ENCODE measurements at regions of chr5 and their contacts with region 1.

Region 1: GRCh38 chr5:58460732-58461286 is 923 bp upstream of the PLK2 start:
- DNase-seq: peak; percentile 90 to 96 (median 93)
- ATAC-seq: peak; percentile 75 to 83 (median 78)
- H3K4me3 ChIP-seq: peak overlapping the region; percentile 80 to 89 (median 85)
- H3K27ac ChIP-seq: peak overlapping the region; percentile 98 to 100 (median 99)
- H3K4me1 ChIP-seq: peaks cover 0 to 12% (median 0%) of the 10 kb centered on the region in 4 donors
- H3K27me3 ChIP-seq: no peaks in the 10 kb centered on the region
- CTCF ChIP-seq: peak; percentile 72 to 84 (median 74)
- POLR2A ChIP-seq: no peak

Region 2: DNA sequence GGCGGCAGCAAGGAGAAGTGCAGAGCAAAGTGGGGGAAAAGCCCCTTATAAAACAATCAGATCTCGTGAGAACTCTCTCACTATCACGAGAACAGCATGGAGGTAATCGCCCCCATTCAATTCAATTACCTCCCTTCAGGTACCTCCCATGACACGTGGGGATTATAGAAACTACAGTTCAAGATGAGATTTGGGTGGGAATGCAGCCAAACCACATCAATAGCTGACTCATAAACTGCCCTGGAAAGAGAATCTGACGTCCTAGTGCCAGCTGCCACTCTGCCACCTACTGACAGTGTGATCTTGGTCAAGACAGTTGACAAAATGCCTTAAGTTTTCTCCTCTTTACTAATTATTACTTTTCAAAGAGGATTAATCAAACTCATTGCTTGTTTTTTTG is 1158.6 kb before region 1 on chr5:
- intact Hi-C with region 1: loop called (anchors 10 kb)
- DNase-seq: peak in 2 of 3 donors; percentile 37 to 63
- ATAC-seq: peak; percentile 48 to 73 (median 60)
- H3K4me3 ChIP-seq: no peak overlapping the region
- H3K27ac ChIP-seq: no peak overlapping the region
- H3K4me1 ChIP-seq: peaks cover 0 to 6% (median 0%) of the 10 kb centered on the region in 4 donors
- H3K27me3 ChIP-seq: no peaks in the 10 kb centered on the region
- CTCF ChIP-seq: peak in 3 of 4 donors; percentile 21 to 31 (median 30)
- POLR2A ChIP-seq: no peak

Region 3: GRCh38 chr5:57499262-57500050 is 961.4 kb before region 1 on chr5:
- intact Hi-C with region 1: loop called in 1 of 2 experiments (anchors 10 kb)
- DNase-seq: no peak
- ATAC-seq: peak; percentile 90 to 93 (median 93)
- H3K4me3 ChIP-seq: peak overlapping the region; percentile 11 to 42 (median 32)
- H3K27ac ChIP-seq: peak overlapping the region in 2 of 3 donors; percentile 13 to 19
- H3K4me1 ChIP-seq: no peaks in the 10 kb centered on the region
- H3K27me3 ChIP-seq: no peaks in the 10 kb centered on the region
- CTCF ChIP-seq: peak; percentile 65 to 79 (median 72)
- POLR2A ChIP-seq: no peak

Region 4: GRCh38 chr5:57724836-57725235 is 736.0 kb before region 1 on chr5:
- intact Hi-C with region 1: no loop called
- DNase-seq: no peak
- ATAC-seq: no peak
- H3K4me3 ChIP-seq: no peak overlapping the region
- H3K27ac ChIP-seq: no peak overlapping the region
- H3K4me1 ChIP-seq: no peaks in the 10 kb centered on the region
- H3K27me3 ChIP-seq: no peaks in the 10 kb centered on the region
- CTCF ChIP-seq: no peak
- POLR2A ChIP-seq: no peak

Region 5: DNA sequence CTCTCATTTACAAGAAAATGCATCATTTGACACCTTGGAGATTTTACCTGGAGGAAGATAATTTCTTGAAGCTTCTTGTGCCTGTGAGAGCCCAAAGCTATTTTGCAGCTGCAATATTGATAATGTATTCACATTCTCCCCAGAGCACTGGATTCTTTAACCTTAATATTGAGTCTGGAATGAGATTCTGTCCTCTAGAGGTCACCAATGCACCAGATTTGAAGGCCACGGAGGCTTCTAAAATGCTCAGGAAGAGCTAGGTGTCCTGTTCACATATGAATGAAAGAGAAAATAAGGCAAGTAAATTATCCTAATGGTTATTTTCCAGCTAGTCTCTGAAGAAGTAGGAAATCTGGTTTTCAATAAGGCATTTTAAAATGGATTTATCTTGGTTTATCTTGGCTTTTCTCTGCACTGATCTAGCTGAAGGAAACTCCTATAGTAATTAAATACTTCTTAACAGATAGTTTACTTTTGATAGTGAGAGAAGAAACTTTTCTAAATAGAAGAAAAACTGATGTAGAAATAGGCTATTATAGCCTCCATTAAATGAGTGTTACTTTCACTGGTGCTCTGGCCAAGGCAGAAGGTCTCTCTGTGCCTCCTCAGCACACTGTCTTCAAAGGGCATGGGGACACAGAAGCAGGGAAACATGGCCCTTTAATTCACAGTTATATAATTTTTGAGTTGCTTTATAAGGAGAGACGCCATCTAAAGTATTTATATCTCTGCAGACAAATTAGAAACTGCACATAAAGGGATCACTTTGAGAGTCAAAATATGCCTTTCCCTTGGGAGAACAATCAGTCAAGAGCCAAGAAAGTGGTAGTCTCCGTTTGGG is 681.2 kb before region 1 on chr5:
- intact Hi-C with region 1: loop called in 1 of 2 experiments (anchors 10 kb)
- DNase-seq: peak in 1 of 3 donors; percentile 55
- ATAC-seq: peak; percentile 72 to 88 (median 79)
- H3K4me3 ChIP-seq: no peak overlapping the region
- H3K27ac ChIP-seq: no peak overlapping the region
- H3K4me1 ChIP-seq: peaks cover 0 to 18% (median 0%) of the 10 kb centered on the region in 4 donors
- H3K27me3 ChIP-seq: no peaks in the 10 kb centered on the region
- CTCF ChIP-seq: peak; percentile 63 to 71 (median 66)
- POLR2A ChIP-seq: no peak

Region 6: DNA sequence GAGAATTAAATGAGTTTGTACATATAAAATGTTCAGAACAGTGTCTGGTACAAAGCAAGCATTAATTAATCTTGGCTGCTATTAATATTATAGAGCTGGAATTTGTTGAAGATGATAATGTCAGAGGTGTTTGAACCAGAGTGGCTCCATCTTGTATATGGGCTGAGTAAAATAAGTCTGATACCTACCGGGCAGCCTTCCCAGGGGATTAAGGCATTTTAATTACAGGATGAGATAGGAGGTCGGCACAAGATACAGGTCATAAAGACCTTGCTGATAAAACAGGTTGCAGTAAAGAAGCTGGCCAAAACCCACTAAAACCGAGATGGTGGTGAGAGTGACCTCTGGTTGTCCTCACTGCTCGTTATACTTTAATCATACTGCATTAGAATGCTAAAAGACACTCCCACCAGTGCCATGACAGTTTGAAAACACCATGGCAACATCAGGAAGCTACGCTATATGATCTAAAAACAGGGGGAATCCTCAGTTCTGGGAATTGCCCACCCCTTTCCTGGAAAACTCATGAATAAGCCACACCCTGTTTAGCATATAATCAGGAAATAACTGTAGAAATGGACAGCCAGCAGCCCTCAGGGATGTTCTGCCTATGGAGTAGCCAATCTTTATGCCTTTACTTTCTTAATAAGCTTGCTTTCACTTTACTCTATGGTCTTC is 91.2 kb before region 1 on chr5:
- intact Hi-C with region 1: no loop called
- DNase-seq: no peak
- ATAC-seq: no peak
- H3K4me3 ChIP-seq: no peak overlapping the region
- H3K27ac ChIP-seq: no peak overlapping the region
- H3K4me1 ChIP-seq: no peaks in the 10 kb centered on the region
- H3K27me3 ChIP-seq: no peaks in the 10 kb centered on the region
- CTCF ChIP-seq: no peak
- POLR2A ChIP-seq: no peak